Activated naive CD8-positive, alpha-beta T cell treated with anti-CD3 and anti-CD28 coated beads, Interleukin-2, amount 10 ng/mL, durations not matched to agents 7 days and 5 days (primary cell): ENCODE measurements at regions of chr5 and their contacts with region 1.

Region 1: DNA sequence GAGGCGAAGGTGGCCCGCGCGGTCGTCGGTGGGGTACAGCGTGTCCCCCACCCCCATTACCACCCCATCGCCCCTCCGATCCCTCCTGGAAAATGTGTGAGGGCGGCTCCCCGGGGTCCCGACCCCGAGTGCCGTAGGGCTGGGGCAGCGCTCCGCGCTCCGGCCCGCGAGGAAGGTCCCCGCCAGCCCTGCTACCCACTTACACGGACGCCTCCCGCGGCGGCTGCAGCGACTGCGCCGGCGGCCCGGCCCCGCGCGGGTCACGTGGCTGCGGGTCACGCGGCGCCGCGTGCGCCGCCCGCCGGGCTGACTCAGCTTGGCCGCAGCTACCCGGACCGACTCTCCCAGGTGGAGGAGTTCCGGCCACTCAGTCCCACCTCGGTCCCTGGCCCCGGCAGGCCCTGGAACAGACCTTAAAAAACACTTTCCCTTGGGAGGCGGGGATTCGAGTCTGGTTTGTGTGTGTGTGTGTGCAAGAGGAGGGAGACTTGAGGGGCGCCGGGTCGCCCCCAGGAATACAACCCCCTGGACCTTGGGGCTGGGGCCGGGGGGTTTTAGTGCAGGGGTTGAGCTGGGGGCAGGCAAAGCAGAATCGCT is at the start of gene GNPDA1:
- DNase-seq: peak; percentile 83
- ATAC-seq: peak; percentile 47
- H3K4me3 Mint-ChIP-seq: peak within 1 kb of the TSS; percentile 89
- H3K27ac Mint-ChIP-seq: peak within 1 kb of the TSS; percentile 94
- H3K4me1 Mint-ChIP-seq: peaks cover 73% of the 10 kb centered on the region
- H3K27me3 Mint-ChIP-seq: no peaks in the 10 kb centered on the region
- total RNA-seq, gene GNPDA1: 38.2 to 40.5 TPM

Region 2: DNA sequence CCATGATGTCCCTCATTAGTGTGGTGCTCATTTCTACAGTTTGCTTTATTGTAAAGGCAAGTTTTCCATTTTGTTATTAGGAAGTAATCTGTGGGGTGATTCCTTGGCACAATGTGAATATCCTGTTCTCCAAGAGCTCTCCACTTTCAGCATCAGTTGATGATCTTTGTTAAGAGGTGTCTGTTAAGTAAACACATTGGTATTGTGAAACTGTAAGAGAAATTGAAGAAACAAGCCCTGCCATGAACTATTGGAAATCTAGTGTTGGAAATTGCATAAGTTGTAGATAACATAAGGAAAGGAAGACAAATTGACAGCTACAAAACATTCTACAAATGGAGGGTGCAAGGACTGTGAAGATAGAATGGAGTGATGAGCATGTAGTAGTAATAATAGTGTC is 26.8 kb before region 1 on chr5:
- POLR2A ChIA-PET with region 1: no interaction called
- DNase-seq: no peak
- ATAC-seq: no peak
- H3K4me3 Mint-ChIP-seq: no peak overlapping the region
- H3K27ac Mint-ChIP-seq: no peak overlapping the region
- H3K4me1 Mint-ChIP-seq: peaks cover 6% of the 10 kb centered on the region
- H3K27me3 Mint-ChIP-seq: no peaks in the 10 kb centered on the region

Region 3: DNA sequence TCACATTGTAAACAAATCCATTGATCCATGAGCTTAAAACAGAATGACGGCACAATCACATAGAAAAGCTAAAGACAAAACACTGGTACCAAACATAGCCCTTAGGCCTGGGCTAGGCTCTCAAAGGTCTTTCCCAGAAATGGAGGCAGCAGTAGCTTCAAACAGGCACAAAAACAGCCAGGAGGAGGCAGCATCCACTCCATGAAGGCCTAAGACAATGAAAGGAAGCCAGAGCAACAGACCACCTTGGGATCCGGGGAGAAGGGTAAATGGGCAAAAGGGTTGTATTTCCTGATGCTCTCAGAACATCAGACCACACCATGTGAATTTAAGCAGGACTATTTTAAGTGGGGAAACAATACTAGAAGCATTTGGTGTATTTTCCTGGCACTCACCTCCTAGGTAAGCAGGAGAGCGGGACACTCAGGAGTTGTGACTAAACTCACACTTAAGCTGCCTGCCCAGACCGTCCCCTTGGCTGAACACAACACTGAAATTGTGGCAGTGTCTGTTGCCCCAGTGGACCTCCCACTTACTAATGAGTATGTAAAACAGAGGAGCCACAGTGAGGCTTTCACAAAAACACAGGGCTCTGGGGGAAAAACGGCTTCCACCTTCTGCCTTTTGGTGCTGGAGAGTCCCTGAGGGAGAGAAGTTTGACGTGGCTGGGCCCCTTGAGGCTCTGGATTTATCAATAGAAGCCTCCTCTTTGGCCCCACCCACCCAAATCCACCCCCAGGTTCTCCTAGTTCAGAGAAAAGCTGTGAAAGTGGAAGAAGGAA is 12.0 kb before region 1 on chr5:
- POLR2A ChIA-PET with region 1: interaction called, 11 read pairs
- DNase-seq: no peak
- ATAC-seq: no peak
- H3K4me3 Mint-ChIP-seq: no peak overlapping the region
- H3K27ac Mint-ChIP-seq: peak overlapping the region; percentile 44
- H3K4me1 Mint-ChIP-seq: peaks cover 25% of the 10 kb centered on the region
- H3K27me3 Mint-ChIP-seq: no peaks in the 10 kb centered on the region

Region 4: DNA sequence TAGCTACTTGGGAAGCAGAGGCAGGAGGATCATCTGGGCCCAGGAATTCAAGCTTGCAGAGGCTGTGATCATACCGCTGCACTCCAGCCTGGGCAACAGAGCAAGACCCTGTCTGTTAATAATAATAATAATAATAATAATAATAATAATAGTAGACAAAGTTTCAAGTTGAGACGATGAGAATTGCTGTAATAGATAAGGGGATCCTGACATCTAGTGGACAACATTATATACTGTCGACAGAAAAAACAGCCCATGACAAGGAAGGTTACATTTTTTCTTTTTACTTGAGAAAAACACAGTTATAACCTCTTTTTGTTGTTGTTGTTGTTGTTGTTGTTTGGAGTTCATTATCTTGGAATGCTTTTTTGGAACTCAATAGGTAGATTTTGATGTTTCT is 131.0 kb after region 1 on chr5:
- POLR2A ChIA-PET with region 1: interaction called, 10 read pairs
- DNase-seq: no peak
- ATAC-seq: no peak
- H3K4me3 Mint-ChIP-seq: no peak overlapping the region
- H3K27ac Mint-ChIP-seq: no peak overlapping the region
- H3K4me1 Mint-ChIP-seq: no peaks in the 10 kb centered on the region
- H3K27me3 Mint-ChIP-seq: no peaks in the 10 kb centered on the region